ENCODE measurements at regions of chr5 and their contacts with region 1.

Region 1: DNA sequence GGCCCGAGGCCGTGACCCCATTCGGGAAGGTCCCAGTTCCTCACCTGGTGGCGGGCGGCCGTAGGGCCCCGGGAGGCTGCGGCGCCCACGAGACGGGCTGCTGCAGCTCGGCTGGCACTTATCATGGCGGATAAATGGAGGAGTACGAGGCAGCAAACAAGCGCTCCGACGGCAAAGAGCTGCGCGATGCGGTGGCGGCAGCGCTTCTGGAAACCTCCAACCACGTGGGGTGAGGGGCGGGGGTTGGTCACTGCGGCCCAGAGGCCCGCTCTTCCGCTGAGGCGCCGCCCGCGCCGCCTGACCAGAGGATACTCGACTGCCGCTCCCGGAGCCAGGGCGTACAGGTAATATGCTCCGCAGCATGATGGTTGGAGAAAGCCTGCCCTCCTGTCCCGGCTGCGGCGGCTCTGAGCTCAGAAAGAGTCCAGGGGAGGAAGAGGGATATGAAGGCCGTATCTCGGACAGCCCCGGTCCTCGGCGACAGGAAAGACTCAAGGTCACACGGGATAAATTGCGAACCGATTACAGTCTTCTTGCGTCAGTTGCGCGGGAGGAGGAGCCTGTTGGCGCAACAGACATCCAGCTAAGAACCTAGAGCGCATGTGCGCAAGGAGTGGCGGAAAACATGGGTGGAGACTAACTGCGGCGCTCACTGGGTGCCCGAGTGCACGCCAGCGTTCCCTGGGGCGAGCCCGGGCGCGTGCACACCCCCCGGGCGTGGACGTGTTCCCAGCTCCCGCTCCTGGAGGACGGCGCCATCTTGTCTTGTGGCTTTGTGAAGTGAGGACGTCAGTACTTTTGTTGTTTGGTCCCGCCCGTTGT is at the start of gene HSPA9:
- DNase-seq: peak; percentile 99 to 100
- ATAC-seq: peak; percentile 91 to 92
- H3K4me3 ChIP-seq: peak within 1 kb of the TSS; percentile 96
- H3K27ac ChIP-seq: peak within 1 kb of the TSS; percentile 98 to 99
- H3K4me1 ChIP-seq: peaks cover 35% of the 10 kb centered on the region
- CTCF ChIP-seq: no peak
- EP300 ChIP-seq: peak in 1 of 2 experiments; percentile 65; a peak in 2 of 5 replicates
- POLR2A ChIP-seq: peak; percentile 72
- RAD21 ChIP-seq: no peak
- polyA plus RNA-seq, gene HSPA9: 544 and 615 TPM in 2 replicates

Region 2: GRCh38 chr5:138528208-138528607 is 47.2 kb before region 1 on chr5:
- CTCF ChIA-PET with region 1: no interaction called
- POLR2A ChIA-PET with region 1: no interaction called
- DNase-seq: no peak
- ATAC-seq: peak in 1 of 2 experiments; percentile 20; a peak in 2 of 6 replicates
- H3K4me3 ChIP-seq: no peak overlapping the region
- H3K27ac ChIP-seq: no peak overlapping the region
- H3K4me1 ChIP-seq: peaks cover 19% of the 10 kb centered on the region; the same call in 2 of the 3 replicates
- CTCF ChIP-seq: no peak
- EP300 ChIP-seq: no peak
- POLR2A ChIP-seq: no peak
- RAD21 ChIP-seq: no peak

Region 3: GRCh38 chr5:138565100-138565821 is 10.1 kb before region 1 on chr5:
- CTCF ChIA-PET with region 1: interaction called, 6 read pairs
- POLR2A ChIA-PET with region 1: interaction called, 11 read pairs
- DNase-seq: no peak
- ATAC-seq: no peak
- H3K4me3 ChIP-seq: no peak overlapping the region
- H3K27ac ChIP-seq: no peak overlapping the region
- H3K4me1 ChIP-seq: peaks cover 31% of the 10 kb centered on the region; the same call in 2 of the 3 replicates
- CTCF ChIP-seq: no peak
- EP300 ChIP-seq: no peak
- POLR2A ChIP-seq: no peak
- RAD21 ChIP-seq: no peak

Region 4: GRCh38 chr5:138601444-138601843 is 26.0 kb after region 1 on chr5:
- CTCF ChIA-PET with region 1: interaction called, 38 read pairs
- POLR2A ChIA-PET with region 1: interaction called, 3 read pairs
- DNase-seq: peak in 1 of 2 experiments; percentile 61
- ATAC-seq: peak; percentile 67 to 69; a peak in 5 of 6 replicates
- H3K4me3 ChIP-seq: no peak overlapping the region
- H3K27ac ChIP-seq: peak overlapping the region; percentile 29 to 59
- H3K4me1 ChIP-seq: peaks cover 9% of the 10 kb centered on the region; the same call in 2 of the 3 replicates
- CTCF ChIP-seq: no peak
- EP300 ChIP-seq: no peak
- POLR2A ChIP-seq: no peak
- RAD21 ChIP-seq: no peak

Region 5: GRCh38 chr5:138737494-138738265 is 162.3 kb after region 1 on chr5:
- CTCF ChIA-PET with region 1: no interaction called
- POLR2A ChIA-PET with region 1: no interaction called
- DNase-seq: no peak
- ATAC-seq: no peak; a peak in 1 of 6 replicates
- H3K4me3 ChIP-seq: no peak overlapping the region
- H3K27ac ChIP-seq: no peak overlapping the region
- H3K4me1 ChIP-seq: 0 out of 3 replicates have a peak, but pooled peaks cover 7% of the 10 kb centered on the region
- CTCF ChIP-seq: no peak
- EP300 ChIP-seq: no peak
- POLR2A ChIP-seq: no peak
- RAD21 ChIP-seq: no peak

Region 6: GRCh38 chr5:139262742-139263445 is 687.5 kb after region 1 on chr5:
- CTCF ChIA-PET with region 1: interaction called, 22 read pairs
- POLR2A ChIA-PET with region 1: interaction called, 3 read pairs
- DNase-seq: peak; percentile 89 to 97
- ATAC-seq: peak; percentile 99 to 100
- H3K4me3 ChIP-seq: no peak overlapping the region
- H3K27ac ChIP-seq: peak overlapping the region in 1 of 2 experiments; percentile 48; a peak in 2 of 6 replicates
- H3K4me1 ChIP-seq: 0 out of 3 replicates have a peak, but pooled peaks cover 4% of the 10 kb centered on the region
- CTCF ChIP-seq: peak; percentile 94
- EP300 ChIP-seq: no peak
- POLR2A ChIP-seq: no peak
- RAD21 ChIP-seq: peak; percentile 98 to 99

Region 7: GRCh38 chr5:139293504-139294373 is 718.3 kb after region 1 on chr5 and contains the start of gene MATR3:
- CTCF ChIA-PET with region 1: no interaction called
- POLR2A ChIA-PET with region 1: interaction called, 15 read pairs
- DNase-seq: peak; percentile 93 to 97
- ATAC-seq: peak; percentile 88 to 89
- H3K4me3 ChIP-seq: peak within 1 kb of the TSS; percentile 66
- H3K27ac ChIP-seq: peak within 1 kb of the TSS; percentile 97 to 98
- H3K4me1 ChIP-seq: peaks cover 34% of the 10 kb centered on the region
- CTCF ChIP-seq: no peak
- EP300 ChIP-seq: no peak
- POLR2A ChIP-seq: peak; percentile 92
- RAD21 ChIP-seq: peak in 1 of 2 experiments; percentile 2; a peak in 2 of 5 replicates
- polyA plus RNA-seq, gene MATR3: 157 and 178 TPM in 2 replicates